ENCODE measurements at regions of chr16 and their contacts with region 1.

Region 1: DNA sequence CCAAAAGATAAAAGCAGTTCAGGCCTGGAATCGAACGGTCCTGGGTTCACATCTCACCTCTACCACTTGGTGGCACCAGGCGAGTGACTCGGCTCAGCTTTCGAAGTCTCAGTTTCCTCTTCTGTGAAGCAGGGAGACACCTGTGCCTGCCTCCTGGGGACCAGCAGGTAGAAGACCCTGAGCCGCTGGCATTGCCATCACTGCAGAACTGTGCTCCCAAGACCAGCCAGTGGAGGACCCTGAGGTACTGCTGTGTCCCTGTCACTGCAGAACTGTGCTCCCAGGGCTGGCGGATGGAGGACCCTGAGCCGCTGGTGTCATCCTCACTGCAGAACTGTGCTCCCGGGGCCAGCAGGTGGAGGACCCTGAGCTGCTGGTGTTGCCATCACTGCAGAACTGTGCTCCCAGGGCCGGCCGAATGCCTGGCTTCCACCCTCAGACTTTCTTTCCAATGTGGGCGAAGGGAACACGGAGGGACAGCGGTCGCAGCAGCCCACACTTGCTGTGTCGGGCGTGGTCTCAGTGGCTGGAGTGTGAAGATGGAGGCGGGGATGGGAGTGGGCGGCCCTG is 8.7 kb upstream of the SLC7A5 start:
- DNase-seq: no peak

Region 2: GRCh38 chr16:87778830-87779579 is 99.0 kb before region 1 on chr16:
- intact Hi-C with region 1: loop called (anchors 5 kb)
- DNase-seq: peak; percentile 98

Region 3: GRCh38 chr16:87828071-87828971 is 49.7 kb before region 1 on chr16:
- intact Hi-C with region 1: loop called in 1 of 2 experiments (anchors 1 kb)
- DNase-seq: no peak

Region 4: DNA sequence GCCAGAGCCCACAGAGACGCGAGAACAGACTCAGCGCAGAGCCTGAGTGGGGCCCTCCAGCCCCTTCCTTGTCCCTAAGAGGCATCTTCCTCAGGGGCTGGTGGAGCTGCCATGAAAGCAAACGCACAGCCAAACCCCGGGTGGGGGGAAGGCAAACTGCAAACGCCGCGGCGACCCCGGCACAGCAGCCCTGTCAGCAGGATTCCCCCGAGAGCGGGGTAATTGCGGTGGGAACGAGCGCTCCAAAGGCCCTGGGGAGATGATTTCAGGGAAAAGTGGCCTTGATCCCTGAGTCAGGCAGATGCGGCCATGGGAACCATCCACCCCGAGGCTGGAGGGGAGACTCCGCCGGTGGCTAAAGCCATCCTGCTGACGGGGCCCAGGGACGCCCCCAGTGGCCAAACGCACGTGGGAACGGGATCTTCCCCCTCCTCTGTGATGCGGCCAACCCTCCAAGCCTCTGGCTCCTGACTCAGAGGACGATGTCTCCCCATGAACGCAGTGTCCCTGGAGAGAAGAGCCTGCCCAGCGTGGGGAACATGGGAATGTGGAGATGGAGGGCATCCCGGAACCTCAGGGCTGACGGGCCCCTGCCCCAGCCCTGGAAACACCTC is 33.8 kb before region 1 on chr16:
- intact Hi-C with region 1: loop called in 1 of 2 experiments (anchors 5 kb)
- DNase-seq: no peak